ENCODE measurements at regions of chr14 and their contacts with region 1.

Region 1: GRCh38 chr14:91510174-91511042 is at the start of gene PPP4R3A:
- DNase-seq: peak; percentile 95 to 96
- H3K4me3 ChIP-seq: peak within 1 kb of the TSS; percentile 47
- H3K4me3 Mint-ChIP-seq: peak within 1 kb of the TSS; percentile 79
- H3K27ac Mint-ChIP-seq: peak within 1 kb of the TSS; percentile 98
- H3K4me1 ChIP-seq: 0 out of 2 replicates have a peak, but pooled peaks cover 11% of the 10 kb centered on the region
- H3K4me1 Mint-ChIP-seq: no peaks in the 10 kb centered on the region
- H3K27me3 ChIP-seq: no peaks in the 10 kb centered on the region
- H3K27me3 Mint-ChIP-seq: no peaks in the 10 kb centered on the region
- CTCF ChIP-seq: no peak
- total RNA-seq, gene PPP4R3A: 96.5 and 98.9 TPM in 2 replicates

Region 2: GRCh38 chr14:91444335-91445020 is 65.9 kb before region 1 on chr14:
- CTCF ChIA-PET with region 1: no interaction called
- POLR2A ChIA-PET with region 1: no interaction called
- intact Hi-C with region 1: no loop called
- DNase-seq: no peak
- H3K4me3 ChIP-seq: no peak overlapping the region
- H3K4me3 Mint-ChIP-seq: no peak overlapping the region
- H3K27ac Mint-ChIP-seq: no peak overlapping the region
- H3K4me1 ChIP-seq: no peaks in the 10 kb centered on the region
- H3K4me1 Mint-ChIP-seq: no peaks in the 10 kb centered on the region
- H3K27me3 ChIP-seq: no peaks in the 10 kb centered on the region
- H3K27me3 Mint-ChIP-seq: peaks cover 11% of the 10 kb centered on the region
- CTCF ChIP-seq: no peak

Region 3: GRCh38 chr14:91568626-91569025 is 58.2 kb after region 1 on chr14:
- CTCF ChIA-PET with region 1: no interaction called
- POLR2A ChIA-PET with region 1: interaction called, 4 read pairs
- intact Hi-C with region 1: loop called (anchors 2 kb)
- DNase-seq: peak in 1 of 2 experiments; percentile 48
- H3K4me3 ChIP-seq: no peak overlapping the region
- H3K4me3 Mint-ChIP-seq: no peak overlapping the region
- H3K27ac Mint-ChIP-seq: no peak overlapping the region
- H3K4me1 ChIP-seq: no peaks in the 10 kb centered on the region
- H3K4me1 Mint-ChIP-seq: no peaks in the 10 kb centered on the region
- H3K27me3 ChIP-seq: no peaks in the 10 kb centered on the region
- H3K27me3 Mint-ChIP-seq: no peaks in the 10 kb centered on the region
- CTCF ChIP-seq: no peak

Measured in Caco-2 (cell line).